SK-N-SH (cell line): ENCODE measurements at regions of chr3 and their contacts with region 1.

Region 1: GRCh38 chr3:101195951-101196713 is 124.2 kb downstream of the IMPG2 start:
- DNase-seq: peak; percentile 10
- H3K4me3 ChIP-seq: no peak overlapping the region
- H3K27ac ChIP-seq: peak overlapping the region in 1 of 2 experiments; percentile 10; a peak in 1 of 4 replicates
- H3K4me1 ChIP-seq: peaks cover 0 to 7% of the 10 kb centered on the region in 2 experiments; a peak in 1 of 4 replicates
- H3K27me3 ChIP-seq: no peaks in the 10 kb centered on the region
- CTCF ChIP-seq: peak; percentile 79
- EP300 ChIP-seq: no peak
- RAD21 ChIP-seq: peak; percentile 89

Region 2: DNA sequence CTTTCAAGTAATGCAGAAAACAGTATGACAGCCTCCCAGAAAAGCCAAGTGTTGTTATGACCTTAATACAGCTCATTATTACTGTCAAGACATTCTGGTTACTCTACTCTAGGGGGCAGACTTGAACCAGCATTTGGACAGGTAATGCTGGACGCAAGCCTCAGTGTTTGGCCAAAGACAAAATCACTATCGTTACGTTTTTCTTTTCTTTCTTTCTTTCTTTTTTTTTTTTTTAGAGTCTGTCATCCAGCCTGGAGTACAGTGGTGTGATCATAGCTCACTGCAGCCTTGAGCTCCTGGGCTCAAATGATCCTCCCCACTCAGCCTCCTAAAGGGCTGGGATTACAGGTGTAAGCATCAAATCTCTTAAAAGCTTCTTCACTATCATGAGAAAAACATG is 733.1 kb before region 1 on chr3:
- CTCF ChIA-PET with region 1: interaction called, 14 read pairs
- POLR2A ChIA-PET with region 1: no interaction called
- DNase-seq: peak; percentile 69
- H3K4me3 ChIP-seq: peak overlapping the region in 1 of 2 experiments; percentile 21; a peak in 1 of 4 replicates
- H3K27ac ChIP-seq: no peak overlapping the region
- H3K4me1 ChIP-seq: 0 out of 4 replicates have a peak, but pooled peaks cover 0 to 2% of the 10 kb centered on the region in 2 experiments
- H3K27me3 ChIP-seq: no peaks in the 10 kb centered on the region
- CTCF ChIP-seq: peak; percentile 86
- EP300 ChIP-seq: no peak
- RAD21 ChIP-seq: peak; percentile 97

Region 3: DNA sequence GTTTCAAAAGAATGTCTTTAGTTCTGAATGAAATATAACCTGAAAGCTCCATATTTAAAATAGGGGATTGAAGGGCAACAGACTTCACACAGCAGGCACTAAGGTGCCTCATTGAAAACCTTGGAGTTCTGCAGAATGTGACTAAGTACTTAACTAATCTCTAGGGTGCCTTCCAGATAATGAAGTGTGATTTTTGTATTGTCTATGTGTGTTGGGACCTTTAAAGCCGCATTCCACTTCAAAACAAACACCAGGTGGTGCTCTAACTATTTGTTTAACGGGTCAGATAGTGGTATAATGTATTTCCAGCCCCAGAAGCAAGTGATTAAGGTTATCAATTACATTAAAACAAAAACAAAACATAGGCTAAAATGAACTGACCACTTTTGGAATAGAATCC is 458.8 kb before region 1 on chr3:
- CTCF ChIA-PET with region 1: interaction called, 32 read pairs
- POLR2A ChIA-PET with region 1: no interaction called
- DNase-seq: peak; percentile 24
- H3K4me3 ChIP-seq: no peak overlapping the region
- H3K27ac ChIP-seq: no peak overlapping the region
- H3K4me1 ChIP-seq: no peaks in the 10 kb centered on the region; a peak in 1 of 4 replicates
- H3K27me3 ChIP-seq: no peaks in the 10 kb centered on the region
- CTCF ChIP-seq: peak; percentile 63
- EP300 ChIP-seq: no peak
- RAD21 ChIP-seq: peak; percentile 70

Region 4: DNA sequence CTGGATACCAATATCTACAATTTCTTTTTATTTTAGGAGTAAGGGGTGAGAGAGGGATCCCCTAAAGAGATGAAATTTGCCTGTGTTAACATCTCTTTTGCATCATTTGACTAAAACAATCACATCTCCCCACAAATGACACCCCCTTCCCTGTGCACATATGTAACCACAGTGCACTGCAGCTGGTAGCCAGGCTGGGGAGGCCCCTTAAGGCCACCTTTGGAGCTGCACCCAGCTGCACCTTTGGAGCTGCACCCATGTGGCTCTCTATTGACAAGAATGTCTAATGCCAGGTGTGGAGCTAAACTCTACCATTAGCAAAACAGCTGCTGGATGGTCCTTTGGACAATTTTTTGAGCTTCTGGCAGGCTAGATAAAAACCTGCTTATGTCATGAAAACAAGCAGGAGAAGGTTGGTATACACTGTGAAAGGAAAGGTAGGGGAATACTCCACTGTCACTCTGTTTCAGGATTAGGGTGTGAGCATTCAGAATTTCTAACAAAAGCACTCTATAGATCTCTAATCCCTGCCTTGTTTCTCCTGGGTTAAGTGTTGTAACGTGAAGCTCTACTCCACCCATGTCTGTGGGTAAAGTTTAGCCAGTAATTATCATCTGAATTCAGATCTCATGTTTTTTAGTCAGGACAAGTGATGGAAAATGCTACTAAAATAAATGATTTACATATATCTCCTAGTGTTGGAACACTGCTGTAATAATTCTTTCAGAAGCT is 434.8 kb before region 1 on chr3:
- CTCF ChIA-PET with region 1: interaction called, 13 read pairs
- POLR2A ChIA-PET with region 1: no interaction called
- DNase-seq: peak; percentile 3
- H3K4me3 ChIP-seq: no peak overlapping the region
- H3K27ac ChIP-seq: no peak overlapping the region
- H3K4me1 ChIP-seq: no peaks in the 10 kb centered on the region; a peak in 1 of 4 replicates
- H3K27me3 ChIP-seq: no peaks in the 10 kb centered on the region
- CTCF ChIP-seq: peak; percentile 17; the same call in 1 of the 2 replicates
- EP300 ChIP-seq: no peak
- RAD21 ChIP-seq: no peak

Region 5: GRCh38 chr3:100893590-100893989 is 302.5 kb before region 1 on chr3:
- CTCF ChIA-PET with region 1: interaction called, 21 read pairs
- POLR2A ChIA-PET with region 1: no interaction called
- DNase-seq: peak; percentile 15
- H3K4me3 ChIP-seq: no peak overlapping the region
- H3K27ac ChIP-seq: no peak overlapping the region
- H3K4me1 ChIP-seq: peaks cover 0 to 3% of the 10 kb centered on the region in 2 experiments; a peak in 3 of 4 replicates
- H3K27me3 ChIP-seq: no peaks in the 10 kb centered on the region
- CTCF ChIP-seq: peak; percentile 67
- EP300 ChIP-seq: no peak
- RAD21 ChIP-seq: peak; percentile 82